H1 (cell line): ENCODE measurements at regions of chr13 and their contacts with region 1.

Region 1: DNA sequence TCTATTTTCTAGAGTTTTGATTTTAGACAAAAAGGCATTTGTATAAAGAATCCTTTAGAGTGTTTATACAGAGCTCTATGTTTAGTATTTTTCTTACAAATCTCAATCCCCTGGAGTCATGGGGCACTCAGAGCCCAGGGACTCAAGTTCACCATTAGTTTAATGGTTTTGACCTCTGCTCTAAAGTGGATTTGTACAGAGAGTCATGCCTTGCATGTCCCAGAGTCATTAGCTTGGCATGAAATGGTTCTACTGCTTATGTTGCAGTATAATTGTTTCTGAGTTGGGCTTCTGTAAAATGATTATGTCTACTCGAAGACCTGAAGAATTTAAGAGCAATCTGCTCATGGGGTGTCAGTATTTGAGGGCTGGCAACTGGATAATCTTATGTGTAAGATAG is 406.2 kb downstream of the DLEU7 start:
- DNase-seq: no peak
- H3K4me3 ChIP-seq: no peak overlapping the region
- H3K27ac ChIP-seq: no peak overlapping the region
- H3K4me1 ChIP-seq: no peaks in the 10 kb centered on the region; a peak in 1 of 7 replicates
- H3K27me3 ChIP-seq: peaks cover 0 to 2% (median 0%) of the 10 kb centered on the region in 4 experiments; a peak in 1 of 7 replicates
- CTCF ChIP-seq: no peak
- EP300 ChIP-seq: no peak
- POLR2A ChIP-seq: no peak
- RAD21 ChIP-seq: no peak

Region 2: GRCh38 chr13:50149932-50150331 is 287.3 kb before region 1 on chr13:
- CTCF ChIA-PET with region 1: no interaction called
- POLR2A ChIA-PET with region 1: no interaction called
- DNase-seq: no peak
- H3K4me3 ChIP-seq: no peak overlapping the region
- H3K27ac ChIP-seq: no peak overlapping the region
- H3K4me1 ChIP-seq: peaks cover 3 to 9% (median 6%) of the 10 kb centered on the region in 4 experiments; a peak in 3 of 7 replicates
- H3K27me3 ChIP-seq: no peaks in the 10 kb centered on the region
- CTCF ChIP-seq: no peak
- EP300 ChIP-seq: no peak
- POLR2A ChIP-seq: no peak
- RAD21 ChIP-seq: no peak

Region 3: GRCh38 chr13:50309882-50310594 is 127.2 kb before region 1 on chr13:
- CTCF ChIA-PET with region 1: no interaction called
- POLR2A ChIA-PET with region 1: no interaction called
- DNase-seq: no peak
- H3K4me3 ChIP-seq: no peak overlapping the region
- H3K27ac ChIP-seq: no peak overlapping the region
- H3K4me1 ChIP-seq: no peaks in the 10 kb centered on the region; a peak in 1 of 7 replicates
- H3K27me3 ChIP-seq: no peaks in the 10 kb centered on the region
- CTCF ChIP-seq: no peak
- EP300 ChIP-seq: no peak
- POLR2A ChIP-seq: no peak
- RAD21 ChIP-seq: no peak

Region 4: DNA sequence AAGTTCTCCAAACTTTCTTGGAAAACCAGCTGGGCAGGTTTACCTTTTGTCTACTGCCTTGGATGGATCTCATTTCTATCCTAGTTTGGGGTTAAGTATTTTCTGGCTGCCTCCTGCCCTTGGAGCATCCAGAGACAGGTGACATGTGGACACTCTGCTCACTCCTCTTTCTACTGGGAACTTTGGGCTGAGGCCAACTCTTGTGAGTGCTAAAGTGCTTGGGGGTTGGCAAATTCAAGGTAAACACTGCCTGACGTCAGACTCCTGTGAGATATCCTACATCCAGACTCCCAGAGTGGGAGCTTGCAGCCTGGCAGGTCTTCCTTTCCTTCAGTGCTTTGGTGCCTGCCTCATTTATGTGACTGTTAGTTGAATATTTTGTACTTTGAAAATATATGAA is 33.9 kb before region 1 on chr13:
- CTCF ChIA-PET with region 1: no interaction called
- POLR2A ChIA-PET with region 1: no interaction called
- DNase-seq: no peak
- H3K4me3 ChIP-seq: no peak overlapping the region
- H3K27ac ChIP-seq: no peak overlapping the region
- H3K4me1 ChIP-seq: no peaks in the 10 kb centered on the region
- H3K27me3 ChIP-seq: no peaks in the 10 kb centered on the region
- CTCF ChIP-seq: no peak
- EP300 ChIP-seq: no peak
- POLR2A ChIP-seq: no peak
- RAD21 ChIP-seq: no peak

Region 5: DNA sequence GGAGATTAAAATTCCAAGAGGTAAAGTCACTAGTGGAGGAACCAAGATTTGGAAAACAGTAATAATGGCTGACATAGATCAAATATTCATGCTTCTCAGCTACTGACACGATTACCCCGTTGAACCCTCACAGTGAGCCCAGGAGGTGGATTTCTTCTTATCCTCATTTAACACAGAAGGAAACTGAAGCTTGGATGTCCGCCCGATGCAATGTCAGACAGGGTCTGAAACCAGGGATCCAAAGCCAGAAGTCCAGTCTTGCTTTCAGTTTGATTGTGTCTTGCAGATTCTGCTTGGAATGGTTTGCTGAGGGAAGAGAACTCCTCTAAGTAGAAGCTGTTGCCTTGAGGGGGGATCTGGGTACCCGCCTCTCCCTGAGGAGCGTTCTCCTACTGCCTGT is 17.4 kb before region 1 on chr13:
- CTCF ChIA-PET with region 1: interaction called, 10 read pairs
- POLR2A ChIA-PET with region 1: no interaction called
- DNase-seq: no peak
- H3K4me3 ChIP-seq: no peak overlapping the region
- H3K27ac ChIP-seq: no peak overlapping the region
- H3K4me1 ChIP-seq: peaks cover 0 to 3% (median 0%) of the 10 kb centered on the region in 4 experiments; a peak in 1 of 7 replicates
- H3K27me3 ChIP-seq: no peaks in the 10 kb centered on the region
- CTCF ChIP-seq: no peak
- EP300 ChIP-seq: no peak
- POLR2A ChIP-seq: no peak
- RAD21 ChIP-seq: no peak

Region 6: DNA sequence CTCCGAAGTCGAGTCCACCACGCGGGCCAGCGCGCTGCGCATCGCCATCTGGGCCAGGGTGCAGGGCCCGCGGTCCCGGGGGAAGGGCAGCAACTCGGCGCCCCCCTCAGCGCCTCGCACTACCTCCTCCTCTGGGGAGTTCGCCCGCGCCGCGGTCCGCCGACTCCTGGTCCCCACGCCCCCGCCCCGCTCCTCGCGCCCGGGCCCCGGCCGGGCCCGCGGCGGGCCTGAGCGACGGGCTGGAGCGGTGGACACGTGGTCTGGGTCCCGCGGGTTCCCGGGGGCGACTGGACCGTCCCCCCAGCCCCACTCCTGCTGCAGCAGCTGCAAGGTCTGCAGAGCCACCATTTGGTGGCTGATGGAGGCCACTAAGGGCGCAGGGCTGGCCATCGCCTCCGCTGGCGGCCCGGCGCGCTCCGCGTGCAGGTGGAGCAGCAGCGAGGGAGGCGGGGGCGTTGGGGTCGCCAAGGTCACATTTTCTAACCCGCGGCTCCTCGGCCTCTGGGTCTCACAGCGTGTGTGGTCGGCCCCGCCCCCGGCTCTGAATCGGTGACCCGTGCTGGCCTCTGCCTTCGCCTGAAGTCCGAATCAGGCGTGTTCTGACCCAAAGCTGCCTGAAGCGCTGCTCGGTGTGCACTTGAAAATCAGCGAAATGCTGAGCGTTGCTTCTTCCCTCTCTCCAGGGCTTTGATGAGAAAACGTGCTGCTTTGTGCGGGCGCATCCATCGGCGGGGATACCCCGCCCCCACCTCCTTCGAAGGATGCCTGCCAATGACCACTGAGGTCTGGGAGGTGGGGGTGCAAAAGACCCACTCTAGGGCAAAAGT is 406.2 kb after region 1 on chr13 and contains the start of gene DLEU7:
- CTCF ChIA-PET with region 1: no interaction called
- POLR2A ChIA-PET with region 1: no interaction called
- DNase-seq: peak in 1 of 2 experiments; percentile 83
- H3K4me3 ChIP-seq: peak within 1 kb of the TSS; percentile 54 to 68 (median 54)
- H3K27ac ChIP-seq: no peak within 1 kb of the TSS
- H3K4me1 ChIP-seq: peaks cover 2 to 22% (median 10%) of the 10 kb centered on the region in 4 experiments
- H3K27me3 ChIP-seq: peaks cover 6 to 23% (median 12%) of the 10 kb centered on the region in 4 experiments; a peak in 6 of 7 replicates
- CTCF ChIP-seq: no peak
- EP300 ChIP-seq: no peak
- POLR2A ChIP-seq: peak in 1 of 2 experiments; percentile 28; a peak in 1 of 3 replicates
- RAD21 ChIP-seq: no peak
- total RNA-seq, gene DLEU7: 4.9 and 5.4 TPM in 2 replicates